Vagina (tissue), 2 donors: ENCODE measurements at regions of chr5 and their contacts with region 1.

Region 1: GRCh38 chr5:73902327-73903051 is 276.5 kb downstream of the ARHGEF28 start:
- DNase-seq: no peak
- H3K4me3 ChIP-seq: no peak overlapping the region
- H3K27ac ChIP-seq: no peak overlapping the region
- H3K4me1 ChIP-seq: peaks cover 5% of the 10 kb centered on the region
- H3K27me3 ChIP-seq: no peaks in the 10 kb centered on the region
- CTCF ChIP-seq: peak; percentile 78 to 89 (median 87)
- POLR2A ChIP-seq: no peak

Region 2: GRCh38 chr5:74648835-74649293 is 746.4 kb after region 1 on chr5:
- intact Hi-C with region 1: loop called (anchors 5 kb)
- DNase-seq: no peak
- H3K4me3 ChIP-seq: no peak overlapping the region
- H3K27ac ChIP-seq: no peak overlapping the region
- H3K4me1 ChIP-seq: peaks cover 5% of the 10 kb centered on the region
- H3K27me3 ChIP-seq: no peaks in the 10 kb centered on the region
- CTCF ChIP-seq: peak in 2 of 3 experiments; percentile 46 to 77
- POLR2A ChIP-seq: no peak